Gastrocnemius medialis (tissue), 4 donors: ENCODE measurements at regions of chr1 and their contacts with region 1.

Region 1: DNA sequence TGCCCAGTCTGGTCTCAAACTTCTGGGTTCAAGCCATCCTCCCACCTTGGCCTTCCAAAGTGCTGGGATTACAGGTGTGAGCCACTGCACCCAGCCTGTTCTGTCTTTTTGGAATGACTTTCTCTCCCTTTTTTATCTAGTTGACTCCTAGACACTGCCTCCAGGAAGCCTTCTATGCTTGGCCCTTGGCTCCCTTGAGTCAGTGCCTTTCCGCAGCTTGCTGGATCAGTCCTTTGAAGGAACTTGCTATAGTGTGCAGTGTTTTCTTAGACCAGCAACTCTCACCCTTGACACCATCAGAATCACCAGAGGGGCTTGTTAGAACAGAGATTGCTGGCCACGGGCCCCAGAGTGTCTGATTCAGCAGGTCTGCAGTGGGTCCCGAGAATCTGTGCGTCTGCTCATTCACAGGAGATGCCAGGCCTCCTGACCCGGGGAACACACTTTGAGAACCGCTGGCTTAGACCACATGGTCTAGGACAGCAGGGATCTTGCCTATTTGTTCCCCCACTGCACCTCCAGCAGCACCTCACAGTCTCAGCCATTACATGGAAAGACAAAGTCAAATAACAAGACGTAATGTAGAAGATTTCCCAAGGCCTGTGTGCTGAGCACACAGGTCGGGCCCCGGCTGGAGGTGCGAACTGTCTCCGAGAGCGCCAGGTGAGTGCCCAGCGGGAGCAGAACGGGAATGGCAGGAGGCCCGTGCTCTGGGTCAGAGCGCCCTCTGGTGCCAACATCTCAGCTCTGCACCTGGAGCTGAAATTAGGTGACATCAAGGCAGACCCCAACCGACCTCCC is 27.4 kb upstream of the CTPS1 start:
- DNase-seq: peak; percentile 32 to 53
- ATAC-seq: peak; percentile 56 to 75
- H3K4me3 ChIP-seq: no peak overlapping the region
- H3K27ac ChIP-seq: no peak overlapping the region
- H3K4me1 ChIP-seq: no peaks in the 10 kb centered on the region
- H3K27me3 ChIP-seq: peaks cover 0 to 4% (median 0%) of the 10 kb centered on the region in 3 donors
- CTCF ChIP-seq: peak; percentile 73 to 88 (median 86)
- POLR2A ChIP-seq: no peak

Region 2: DNA sequence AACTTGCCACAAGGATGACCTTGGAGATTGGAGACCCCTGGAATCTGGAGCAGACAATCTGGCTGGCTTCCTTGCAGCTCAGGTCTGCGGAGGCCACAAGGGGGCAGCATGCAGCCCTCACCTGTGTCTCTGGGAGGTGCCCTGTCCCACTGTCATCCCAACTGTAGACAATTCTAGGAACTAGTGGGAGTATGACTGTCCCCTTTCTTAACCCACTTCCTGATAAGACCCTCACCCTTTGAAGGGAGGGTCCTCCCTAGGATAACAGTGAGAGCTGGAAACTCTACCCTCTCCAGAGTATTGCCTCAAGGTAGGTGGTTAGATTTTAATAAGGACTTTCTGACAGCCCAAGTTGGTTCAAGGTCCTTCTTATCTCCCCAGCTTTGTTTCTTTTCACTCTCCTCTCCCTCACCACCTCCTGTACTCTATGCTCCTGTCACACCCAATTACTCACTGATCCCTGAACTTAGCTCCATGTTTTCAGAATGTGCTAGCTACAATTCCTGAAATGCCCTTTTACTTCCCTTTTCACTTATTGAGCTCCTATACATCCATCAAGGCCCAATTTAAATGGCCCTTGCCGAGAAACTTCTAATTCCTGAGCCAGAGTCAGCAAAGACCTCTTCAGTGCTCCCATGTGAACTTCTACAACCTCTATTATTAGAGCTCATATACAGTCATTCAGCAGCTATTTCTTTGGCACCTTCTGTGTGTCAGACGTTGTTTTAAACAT is 177.7 kb before region 1 on chr1:
- in situ Hi-C with region 1: loop called in 1 of 4 experiments (anchors 10 kb)
- intact Hi-C with region 1: loop called (anchors 2 kb)
- DNase-seq: peak; percentile 26 to 55
- ATAC-seq: peak; percentile 55 to 68
- H3K4me3 ChIP-seq: no peak overlapping the region
- H3K27ac ChIP-seq: no peak overlapping the region
- H3K4me1 ChIP-seq: peaks cover 8 to 27% of the 10 kb centered on the region in 2 donors
- H3K27me3 ChIP-seq: no peaks in the 10 kb centered on the region
- CTCF ChIP-seq: peak; percentile 60 to 87 (median 81)
- POLR2A ChIP-seq: no peak

Region 3: DNA sequence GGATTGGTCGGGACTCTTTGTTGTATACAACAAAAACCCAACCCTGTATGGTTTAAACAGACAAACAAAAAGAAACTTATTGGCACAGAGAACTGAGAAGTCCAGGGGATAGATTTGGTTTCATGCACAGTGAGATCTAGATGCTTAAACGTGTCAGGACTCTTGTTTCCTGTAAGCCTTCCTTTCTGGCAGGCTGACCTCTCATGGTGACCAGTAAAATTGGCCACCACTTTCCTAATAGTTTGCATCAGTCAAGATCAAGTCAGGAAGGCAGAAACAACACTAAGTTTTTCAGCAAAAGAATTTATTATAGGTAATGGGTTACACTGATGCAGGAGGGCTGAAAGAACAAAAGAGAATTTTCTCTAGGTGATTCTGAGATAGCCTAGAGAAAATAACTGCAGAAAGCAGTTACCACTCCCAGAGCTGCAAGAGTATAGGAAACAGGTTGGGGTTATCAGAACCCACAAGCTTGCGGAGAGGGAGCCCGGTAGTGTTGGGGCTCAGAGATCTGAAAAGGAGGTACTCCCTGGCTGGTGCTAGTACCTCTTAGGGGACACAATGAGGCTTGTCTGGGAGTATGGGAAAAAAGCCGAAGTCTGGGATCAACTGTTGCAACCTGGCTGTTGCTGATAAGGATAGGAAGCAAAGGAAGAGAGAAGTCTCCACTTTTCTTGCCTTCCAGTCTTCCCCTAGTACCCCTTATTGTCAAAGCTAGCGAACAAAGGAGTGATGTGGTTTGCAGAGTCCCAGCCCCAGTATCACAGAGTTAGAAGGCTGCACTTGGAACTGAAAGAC is 111.4 kb before region 1 on chr1:
- in situ Hi-C with region 1: loop called in 3 of 4 experiments (anchors 5 to 10 kb)
- intact Hi-C with region 1: no loop called
- DNase-seq: no peak
- ATAC-seq: no peak
- H3K4me3 ChIP-seq: no peak overlapping the region
- H3K27ac ChIP-seq: no peak overlapping the region
- H3K4me1 ChIP-seq: no peaks in the 10 kb centered on the region
- H3K27me3 ChIP-seq: no peaks in the 10 kb centered on the region
- CTCF ChIP-seq: no peak
- POLR2A ChIP-seq: no peak

Region 4: GRCh38 chr1:40849801-40850592 is 102.1 kb before region 1 on chr1:
- in situ Hi-C with region 1: loop called in 3 of 4 experiments (anchors 5 to 10 kb)
- intact Hi-C with region 1: loop called (anchors 1 kb)
- DNase-seq: peak; percentile 34 to 60
- ATAC-seq: peak; percentile 84
- H3K4me3 ChIP-seq: no peak overlapping the region
- H3K27ac ChIP-seq: no peak overlapping the region
- H3K4me1 ChIP-seq: no peaks in the 10 kb centered on the region
- H3K27me3 ChIP-seq: no peaks in the 10 kb centered on the region
- CTCF ChIP-seq: peak; percentile 89 to 94 (median 89)
- POLR2A ChIP-seq: no peak